Activated naive CD4-positive, alpha-beta T cell treated with anti-CD3 and anti-CD28 coated beads for 36 hours (primary cell): ENCODE measurements at regions of chr14 and their contacts with region 1.

Region 1: GRCh38 chr14:34873591-34874385 is 1.4 kb downstream of the BAZ1A start:
- DNase-seq: peak; percentile 95
- H3K4me3 Mint-ChIP-seq: peak overlapping the region; percentile 89
- H3K27ac Mint-ChIP-seq: peak overlapping the region; percentile 98
- H3K4me1 Mint-ChIP-seq: peaks cover 35% of the 10 kb centered on the region
- H3K27me3 Mint-ChIP-seq: no peaks in the 10 kb centered on the region

Region 2: GRCh38 chr14:34629657-34630529 is 243.9 kb before region 1 on chr14 and contains the start of gene SNX6:
- CTCF ChIA-PET with region 1: no interaction called
- intact Hi-C with region 1: loop called (anchors 1 kb)
- DNase-seq: peak; percentile 85
- H3K4me3 Mint-ChIP-seq: peak within 1 kb of the TSS; percentile 93
- H3K27ac Mint-ChIP-seq: peak within 1 kb of the TSS; percentile 89
- H3K4me1 Mint-ChIP-seq: peaks cover 20% of the 10 kb centered on the region
- H3K27me3 Mint-ChIP-seq: no peaks in the 10 kb centered on the region
- total RNA-seq, gene SNX6: 73.9 to 74.3 TPM

Region 3: DNA sequence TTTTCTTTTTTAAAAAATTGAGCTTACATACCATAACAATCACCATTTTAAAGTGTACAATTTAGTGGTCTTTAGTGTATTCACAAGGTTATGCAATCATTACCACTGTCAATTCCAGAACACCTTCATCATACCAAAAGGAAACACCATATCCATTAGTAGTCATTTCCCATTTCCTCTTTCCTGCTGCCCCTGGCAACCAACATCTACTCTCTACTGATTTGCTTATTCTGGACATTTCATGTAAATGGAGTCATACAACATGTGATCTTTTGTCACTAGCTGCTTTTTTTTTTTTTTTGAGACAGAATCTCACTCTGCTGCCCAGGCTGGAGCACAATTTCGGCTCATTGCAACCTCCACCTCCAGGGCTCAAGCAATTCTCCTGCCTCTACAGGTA is 92.5 kb before region 1 on chr14:
- CTCF ChIA-PET with region 1: no interaction called
- intact Hi-C with region 1: loop called (anchors 2 kb)
- DNase-seq: peak; percentile 10
- H3K4me3 Mint-ChIP-seq: no peak overlapping the region
- H3K27ac Mint-ChIP-seq: peak overlapping the region; percentile 53
- H3K4me1 Mint-ChIP-seq: peaks cover 12% of the 10 kb centered on the region
- H3K27me3 Mint-ChIP-seq: no peaks in the 10 kb centered on the region

Region 4: DNA sequence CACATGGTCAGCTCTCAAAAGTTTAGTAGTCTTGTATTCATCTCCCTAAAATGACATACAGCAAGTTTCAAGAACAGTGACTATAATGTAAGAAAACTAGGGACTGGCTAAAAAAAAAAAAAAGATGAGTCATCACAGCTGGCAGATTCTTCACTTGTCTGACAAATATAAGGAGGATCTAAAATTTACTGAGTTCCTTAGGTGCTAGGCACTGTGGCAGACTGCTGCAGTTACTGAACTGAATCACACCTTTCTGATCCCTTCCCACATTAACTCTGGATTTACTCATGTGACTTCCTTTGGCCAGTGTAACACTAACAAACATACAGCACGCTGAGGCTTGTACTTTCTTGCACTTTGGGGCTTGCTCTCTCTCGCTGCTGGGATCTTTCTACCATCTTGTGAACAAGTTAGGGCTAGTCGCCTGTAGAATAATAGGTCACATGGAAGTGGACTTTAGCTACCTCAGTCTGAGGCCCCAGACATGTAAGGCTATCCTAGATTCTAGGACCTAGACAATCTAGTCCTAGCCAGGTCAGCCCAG is 30.7 kb before region 1 on chr14:
- CTCF ChIA-PET with region 1: interaction called, 3 read pairs
- intact Hi-C with region 1: loop called (anchors 1 kb)
- DNase-seq: peak; percentile 59
- H3K4me3 Mint-ChIP-seq: no peak overlapping the region
- H3K27ac Mint-ChIP-seq: peak overlapping the region; percentile 89
- H3K4me1 Mint-ChIP-seq: peaks cover 30% of the 10 kb centered on the region
- H3K27me3 Mint-ChIP-seq: no peaks in the 10 kb centered on the region

Region 5: DNA sequence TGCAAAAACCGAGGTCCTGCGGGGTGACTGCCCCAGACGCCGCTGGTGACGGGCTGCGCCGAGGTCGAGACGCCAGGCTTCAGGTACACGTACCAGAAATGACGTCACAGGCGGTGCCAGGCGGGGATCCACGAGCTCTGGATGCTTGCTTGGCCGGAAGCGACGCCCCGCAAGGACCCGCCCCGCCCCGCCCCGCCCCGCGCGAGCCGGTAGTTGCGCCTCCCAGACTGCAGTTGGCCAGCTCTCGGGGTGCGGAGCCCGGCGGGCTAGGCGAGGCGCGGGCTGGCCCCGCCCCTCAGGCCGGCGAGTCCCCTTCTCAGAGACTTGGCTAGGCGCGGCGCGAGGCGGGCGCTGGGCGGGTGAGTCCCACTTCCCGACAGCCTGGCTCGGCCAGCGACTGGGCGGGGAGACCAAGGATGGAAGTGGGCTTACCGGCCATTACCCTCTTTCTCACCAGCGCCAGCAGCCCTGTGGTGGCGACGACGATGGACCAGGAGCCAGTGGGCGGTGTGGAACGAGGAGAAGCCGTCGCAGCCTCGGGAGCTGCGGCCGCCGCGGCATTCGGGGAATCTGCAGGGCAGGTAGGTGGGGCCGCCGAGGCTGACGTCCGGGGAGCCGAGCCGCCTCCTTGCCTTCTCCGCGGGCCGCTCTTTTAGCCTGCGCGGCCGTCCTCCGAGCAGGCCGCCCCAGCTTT is 172.4 kb after region 1 on chr14 and contains the start of gene FAM177A1:
- CTCF ChIA-PET with region 1: no interaction called
- intact Hi-C with region 1: loop called (anchors 1 kb)
- DNase-seq: peak; percentile 99
- H3K4me3 Mint-ChIP-seq: peak within 1 kb of the TSS; percentile 89
- H3K27ac Mint-ChIP-seq: peak within 1 kb of the TSS; percentile 98
- H3K4me1 Mint-ChIP-seq: peaks cover 25% of the 10 kb centered on the region
- H3K27me3 Mint-ChIP-seq: no peaks in the 10 kb centered on the region
- total RNA-seq, gene FAM177A1: 55.0 to 58.5 TPM

Region 6: DNA sequence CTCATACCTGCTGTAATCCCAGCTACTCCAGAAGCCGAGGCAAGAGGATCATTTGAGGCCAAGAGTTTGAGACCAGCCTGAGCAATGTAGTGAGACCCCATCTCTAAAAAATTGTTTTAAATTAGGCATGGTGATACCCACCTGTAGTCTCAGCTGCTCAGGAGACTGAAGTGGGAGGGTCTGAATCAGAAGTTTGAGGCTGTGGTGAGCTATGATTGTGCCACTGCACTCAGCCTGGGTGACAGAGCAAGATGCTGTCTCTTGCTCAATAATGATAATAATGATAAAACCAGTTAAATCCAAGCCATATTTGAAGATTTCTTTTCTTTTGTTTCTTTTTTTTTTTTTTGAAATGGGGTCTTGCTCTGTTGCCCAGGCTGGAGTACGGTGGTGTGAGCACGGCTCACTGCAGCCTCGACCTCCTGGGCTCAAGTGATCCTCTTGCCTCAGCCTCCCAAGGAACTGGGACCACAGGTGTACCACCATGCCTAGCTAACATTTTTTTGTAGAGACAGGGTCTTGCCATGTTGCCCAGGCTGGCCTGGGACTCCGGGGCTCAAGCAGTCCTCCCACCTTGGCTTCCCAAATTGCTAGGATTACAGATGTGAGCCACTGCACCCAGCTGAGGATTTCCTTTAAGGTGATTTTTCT is 431.1 kb after region 1 on chr14:
- CTCF ChIA-PET with region 1: no interaction called
- intact Hi-C with region 1: no loop called
- DNase-seq: no peak
- H3K4me3 Mint-ChIP-seq: no peak overlapping the region
- H3K27ac Mint-ChIP-seq: no peak overlapping the region
- H3K4me1 Mint-ChIP-seq: peaks cover 46% of the 10 kb centered on the region
- H3K27me3 Mint-ChIP-seq: no peaks in the 10 kb centered on the region

Region 7: GRCh38 chr14:35458442-35458841 is 584.7 kb after region 1 on chr14:
- CTCF ChIA-PET with region 1: no interaction called
- intact Hi-C with region 1: no loop called
- DNase-seq: no peak
- H3K4me3 Mint-ChIP-seq: no peak overlapping the region
- H3K27ac Mint-ChIP-seq: no peak overlapping the region
- H3K4me1 Mint-ChIP-seq: no peaks in the 10 kb centered on the region
- H3K27me3 Mint-ChIP-seq: no peaks in the 10 kb centered on the region

Region 8: GRCh38 chr14:36320200-36320896 is 1446.6 kb after region 1 on chr14 and contains the start of gene MBIP:
- CTCF ChIA-PET with region 1: no interaction called
- intact Hi-C with region 1: loop called (anchors 1 kb)
- DNase-seq: peak; percentile 98
- H3K4me3 Mint-ChIP-seq: peak within 1 kb of the TSS; percentile 97
- H3K27ac Mint-ChIP-seq: peak within 1 kb of the TSS; percentile 96
- H3K4me1 Mint-ChIP-seq: peaks cover 27% of the 10 kb centered on the region
- H3K27me3 Mint-ChIP-seq: peaks cover 5% of the 10 kb centered on the region
- total RNA-seq, gene MBIP: 29.9 to 30.8 TPM